ENCODE measurements at regions of chr13 and their contacts with region 1.

Region 1: DNA sequence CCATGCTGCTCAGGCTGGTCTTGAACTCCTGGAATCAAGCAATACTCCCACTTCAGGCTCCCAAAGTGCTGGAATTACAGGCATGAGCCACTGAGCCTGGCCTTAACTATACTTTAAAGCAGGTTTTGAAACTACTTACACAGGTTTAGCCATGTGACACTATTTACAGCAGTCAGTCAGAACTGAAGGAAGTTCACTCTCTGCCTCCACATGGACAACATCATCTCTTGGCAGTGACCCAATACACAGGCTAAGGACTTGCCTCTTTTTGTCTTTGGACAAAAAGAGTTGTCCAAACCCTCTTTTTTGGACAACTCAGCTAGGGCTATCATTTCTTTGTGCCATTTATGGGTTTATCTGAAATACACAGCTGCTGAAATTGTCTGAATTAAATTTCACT is 89.0 kb upstream of the CLDN10 start:
- DNase-seq: no peak
- ATAC-seq: no peak
- H3K4me3 ChIP-seq: no peak overlapping the region
- H3K27ac ChIP-seq: no peak overlapping the region
- H3K4me1 ChIP-seq: no peaks in the 10 kb centered on the region
- H3K27me3 ChIP-seq: no peaks in the 10 kb centered on the region
- CTCF ChIP-seq: no peak

Region 2: GRCh38 chr13:95360464-95361097 is 103.0 kb before region 1 on chr13:
- intact Hi-C with region 1: no loop called
- DNase-seq: no peak
- ATAC-seq: no peak
- H3K4me3 ChIP-seq: no peak overlapping the region
- H3K27ac ChIP-seq: no peak overlapping the region
- H3K4me1 ChIP-seq: no peaks in the 10 kb centered on the region
- H3K27me3 ChIP-seq: peaks cover 0 to 3% (median 0%) of the 10 kb centered on the region in 4 donors
- CTCF ChIP-seq: no peak

Region 3: GRCh38 chr13:95451656-95452055 is 11.9 kb before region 1 on chr13:
- intact Hi-C with region 1: loop called in 1 of 3 experiments (anchors 2 kb)
- DNase-seq: no peak
- ATAC-seq: no peak
- H3K4me3 ChIP-seq: no peak overlapping the region
- H3K27ac ChIP-seq: no peak overlapping the region
- H3K4me1 ChIP-seq: no peaks in the 10 kb centered on the region
- H3K27me3 ChIP-seq: no peaks in the 10 kb centered on the region
- CTCF ChIP-seq: no peak

Region 4: GRCh38 chr13:95741584-95742563 is 278.3 kb after region 1 on chr13:
- intact Hi-C with region 1: no loop called
- DNase-seq: peak in 1 of 6 donors; percentile 39
- ATAC-seq: peak in 2 of 4 donors; percentile 32 to 33
- H3K4me3 ChIP-seq: no peak overlapping the region
- H3K27ac ChIP-seq: no peak overlapping the region
- H3K4me1 ChIP-seq: peaks cover 7 to 16% (median 9%) of the 10 kb centered on the region in 3 donors
- H3K27me3 ChIP-seq: no peaks in the 10 kb centered on the region
- CTCF ChIP-seq: no peak

Measured in pancreas (tissue), 10 donors.